ENCODE measurements at regions of chr1 and their contacts with region 1.

Region 1: GRCh38 chr1:171141688-171142415 is 43.2 kb upstream of the FMO2 start:
- DNase-seq: peak; percentile 34 to 89
- H3K4me3 ChIP-seq: peak overlapping the region in 1 of 2 donors; percentile 21
- H3K27ac ChIP-seq: peak overlapping the region; percentile 88 to 89
- H3K4me1 ChIP-seq: peaks cover 5 to 54% of the 10 kb centered on the region in 2 donors
- H3K27me3 ChIP-seq: no peaks in the 10 kb centered on the region
- CTCF ChIP-seq: peak in 2 of 3 experiments; percentile 25 to 32

Region 2: DNA sequence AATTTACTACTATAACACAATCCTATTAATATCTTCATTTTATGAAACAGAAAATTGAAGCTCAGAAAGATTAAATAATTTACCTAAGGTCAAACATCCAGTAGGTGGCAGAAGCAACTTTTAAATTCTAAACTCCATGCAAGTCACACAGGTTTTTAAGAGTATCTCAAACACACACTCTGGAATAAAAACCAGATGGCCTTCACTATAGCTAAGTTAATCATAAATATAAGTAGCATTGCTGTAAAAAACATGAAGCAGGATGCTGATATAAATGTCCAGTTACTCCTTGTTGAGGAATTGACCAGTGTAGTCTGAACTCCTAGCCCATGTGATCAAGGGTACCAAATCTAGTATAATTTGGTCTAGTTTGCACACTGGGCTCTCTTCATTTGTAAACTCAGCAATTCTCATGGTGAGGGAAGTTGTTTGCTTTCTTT is 60.5 kb before region 1 on chr1:
- intact Hi-C with region 1: loop called (anchors 1 kb)
- DNase-seq: no peak
- H3K4me3 ChIP-seq: peak overlapping the region in 1 of 2 donors; percentile 24
- H3K27ac ChIP-seq: peak overlapping the region; percentile 78 to 80
- H3K4me1 ChIP-seq: peaks cover 0 to 10% of the 10 kb centered on the region in 2 donors
- H3K27me3 ChIP-seq: no peaks in the 10 kb centered on the region
- CTCF ChIP-seq: peak; percentile 41 to 56 (median 43)

Region 3: GRCh38 chr1:171107262-171107940 is 34.5 kb before region 1 on chr1:
- intact Hi-C with region 1: loop called (anchors 2 kb)
- DNase-seq: no peak
- H3K4me3 ChIP-seq: no peak overlapping the region
- H3K27ac ChIP-seq: no peak overlapping the region
- H3K4me1 ChIP-seq: peaks cover 0 to 25% of the 10 kb centered on the region in 2 donors
- H3K27me3 ChIP-seq: no peaks in the 10 kb centered on the region
- CTCF ChIP-seq: peak in 1 of 3 experiments; percentile 32

Region 4: DNA sequence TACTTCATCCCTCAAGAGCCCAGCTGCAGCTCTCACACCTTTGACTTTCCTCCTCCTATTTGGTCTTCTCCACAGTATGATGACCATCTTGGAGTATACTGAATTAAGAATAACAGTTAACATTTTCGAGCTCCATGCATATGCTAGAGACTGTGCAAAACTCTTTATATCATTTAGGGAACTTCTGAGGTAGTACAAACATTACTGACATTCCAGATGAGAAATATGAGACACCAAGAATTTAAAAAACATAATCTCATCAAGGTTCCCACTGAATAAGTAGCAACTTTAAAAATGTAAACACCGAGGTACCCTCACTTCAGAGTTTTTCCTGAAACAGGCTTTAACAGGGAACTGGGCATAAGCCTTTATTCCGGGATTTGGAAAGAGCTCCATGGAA is 28.5 kb before region 1 on chr1:
- intact Hi-C with region 1: loop called (anchors 2 kb)
- DNase-seq: no peak
- H3K4me3 ChIP-seq: no peak overlapping the region
- H3K27ac ChIP-seq: peak overlapping the region; percentile 68 to 79
- H3K4me1 ChIP-seq: peaks cover 4 to 48% of the 10 kb centered on the region in 2 donors
- H3K27me3 ChIP-seq: no peaks in the 10 kb centered on the region
- CTCF ChIP-seq: no peak

Region 5: GRCh38 chr1:171188388-171189266 is 46.8 kb after region 1 on chr1:
- intact Hi-C with region 1: loop called (anchors 2 kb)
- DNase-seq: peak in 1 of 2 donors; percentile 74
- H3K4me3 ChIP-seq: peak overlapping the region; percentile 54 to 58
- H3K27ac ChIP-seq: peak overlapping the region; percentile 74 to 83
- H3K4me1 ChIP-seq: peaks cover 1 to 6% of the 10 kb centered on the region in 2 donors
- H3K27me3 ChIP-seq: no peaks in the 10 kb centered on the region
- CTCF ChIP-seq: peak; percentile 49 to 80 (median 77)

Region 6: DNA sequence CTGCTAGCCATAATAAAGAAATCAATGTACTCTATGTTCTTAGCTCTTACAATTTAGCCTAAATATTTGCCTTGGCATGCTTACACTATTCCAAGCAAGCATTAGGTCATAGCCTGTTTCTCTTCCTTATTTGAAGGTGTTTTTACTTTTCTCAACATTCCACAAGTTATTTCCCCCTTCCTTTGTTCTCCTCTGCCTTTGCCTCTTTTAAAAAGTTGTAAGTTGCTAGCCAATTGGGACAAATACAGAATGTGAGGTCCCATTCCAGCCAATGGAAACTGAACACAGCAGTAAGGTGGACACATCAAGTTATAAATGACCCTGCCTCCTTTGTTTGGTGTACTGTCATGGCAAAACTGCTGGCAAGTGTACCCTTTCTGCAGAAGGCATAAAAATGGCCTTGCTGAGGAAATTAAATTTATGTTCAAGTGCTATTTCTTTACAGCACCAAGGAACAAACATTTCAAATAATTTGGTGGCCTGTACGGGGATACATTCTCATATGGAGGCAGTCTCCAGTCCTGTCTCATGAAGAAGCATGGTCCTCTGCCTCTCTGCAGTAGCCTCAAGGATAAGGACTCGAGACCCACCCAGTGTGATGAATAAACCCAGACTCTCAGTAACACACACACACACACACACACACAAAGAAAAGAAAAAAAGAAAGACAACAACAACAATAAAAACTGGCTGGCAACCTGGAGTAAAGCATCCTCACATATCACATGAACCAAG is 77.7 kb after region 1 on chr1:
- intact Hi-C with region 1: loop called (anchors 1 kb)
- DNase-seq: no peak
- H3K4me3 ChIP-seq: no peak overlapping the region
- H3K27ac ChIP-seq: peak overlapping the region; percentile 89 to 90
- H3K4me1 ChIP-seq: peaks cover 12 to 46% of the 10 kb centered on the region in 2 donors
- H3K27me3 ChIP-seq: no peaks in the 10 kb centered on the region
- CTCF ChIP-seq: no peak

Region 7: GRCh38 chr1:171226747-171227370 is 85.0 kb after region 1 on chr1:
- intact Hi-C with region 1: loop called (anchors 2 kb)
- DNase-seq: peak in 1 of 2 donors; percentile 69
- H3K4me3 ChIP-seq: no peak overlapping the region
- H3K27ac ChIP-seq: no peak overlapping the region
- H3K4me1 ChIP-seq: peaks cover under 1 to 22% of the 10 kb centered on the region in 2 donors
- H3K27me3 ChIP-seq: no peaks in the 10 kb centered on the region
- CTCF ChIP-seq: peak; percentile 70 to 85 (median 81)

Region 8: GRCh38 chr1:171610385-171610784 is 468.5 kb after region 1 on chr1:
- intact Hi-C with region 1: no loop called
- DNase-seq: no peak
- H3K4me3 ChIP-seq: no peak overlapping the region
- H3K27ac ChIP-seq: no peak overlapping the region
- H3K4me1 ChIP-seq: no peaks in the 10 kb centered on the region
- H3K27me3 ChIP-seq: no peaks in the 10 kb centered on the region
- CTCF ChIP-seq: no peak

Measured in ascending aorta (tissue), 2 donors.